ENCODE measurements at regions of chr2 and their contacts with region 1.

Region 1: GRCh38 chr2:82665691-82666090 is 1793.4 kb downstream of the SUCLG1 start:
- DNase-seq: no peak
- ATAC-seq: no peak
- H3K4me3 ChIP-seq: no peak overlapping the region
- H3K27ac ChIP-seq: no peak overlapping the region
- H3K4me1 ChIP-seq: no peaks in the 10 kb centered on the region
- H3K27me3 ChIP-seq: no peaks in the 10 kb centered on the region
- CTCF ChIP-seq: no peak
- POLR2A ChIP-seq: no peak
- RAD21 ChIP-seq: no peak

Region 2: DNA sequence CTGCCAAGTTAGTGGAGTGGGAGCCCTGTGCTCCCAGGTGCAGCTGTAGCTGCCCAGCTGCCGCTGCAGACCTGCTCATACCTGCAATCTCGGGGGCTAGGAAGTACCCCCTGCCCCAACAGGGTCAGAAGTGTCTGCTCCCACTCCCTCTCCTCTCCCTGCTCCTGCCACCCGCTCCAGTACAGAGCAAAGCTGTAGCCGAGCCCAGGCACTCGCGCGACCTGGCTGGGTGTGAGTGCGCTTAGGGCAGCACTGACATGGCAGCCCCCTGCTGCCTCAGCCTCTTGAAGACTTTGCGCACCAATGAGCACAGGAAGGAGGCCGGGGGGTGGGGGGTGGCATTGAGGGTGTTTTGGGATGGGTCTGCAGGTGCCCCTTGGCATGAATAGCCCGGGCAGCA is 158.0 kb before region 1 on chr2:
- CTCF ChIA-PET with region 1: no interaction called
- POLR2A ChIA-PET with region 1: no interaction called
- dilution Hi-C with region 1: no loop called
- in situ Hi-C with region 1: no loop called
- intact Hi-C with region 1: no loop called
- DNase-seq: no peak
- ATAC-seq: no peak
- H3K4me3 ChIP-seq: no peak overlapping the region
- H3K27ac ChIP-seq: no peak overlapping the region
- H3K4me1 ChIP-seq: no peaks in the 10 kb centered on the region
- H3K27me3 ChIP-seq: no peaks in the 10 kb centered on the region
- CTCF ChIP-seq: no peak
- POLR2A ChIP-seq: no peak
- RAD21 ChIP-seq: no peak

Region 3: DNA sequence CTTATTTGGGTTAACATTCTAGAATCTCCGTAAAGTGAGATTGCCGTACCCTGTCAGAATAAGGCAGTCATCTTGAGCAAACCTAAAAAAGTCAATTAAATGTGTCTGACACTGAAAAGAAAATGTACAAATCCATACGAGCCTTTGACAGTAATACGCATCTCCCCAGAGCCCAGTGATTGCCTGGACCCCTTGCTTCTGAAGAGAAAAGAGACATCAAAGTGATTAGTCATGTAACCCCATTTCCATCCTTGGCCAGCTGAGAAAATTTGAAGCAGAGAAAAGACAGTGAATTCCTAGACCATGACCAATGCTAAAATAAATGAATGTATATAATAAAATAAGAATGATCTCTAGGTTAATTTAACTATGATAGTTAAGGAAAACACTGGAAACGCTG is 294.0 kb after region 1 on chr2:
- CTCF ChIA-PET with region 1: no interaction called
- POLR2A ChIA-PET with region 1: no interaction called
- dilution Hi-C with region 1: no loop called
- in situ Hi-C with region 1: no loop called
- intact Hi-C with region 1: loop called (anchors 10 kb)
- DNase-seq: no peak
- ATAC-seq: no peak
- H3K4me3 ChIP-seq: no peak overlapping the region
- H3K27ac ChIP-seq: no peak overlapping the region
- H3K4me1 ChIP-seq: no peaks in the 10 kb centered on the region
- H3K27me3 ChIP-seq: no peaks in the 10 kb centered on the region
- CTCF ChIP-seq: no peak
- POLR2A ChIP-seq: no peak
- RAD21 ChIP-seq: no peak

Region 4: DNA sequence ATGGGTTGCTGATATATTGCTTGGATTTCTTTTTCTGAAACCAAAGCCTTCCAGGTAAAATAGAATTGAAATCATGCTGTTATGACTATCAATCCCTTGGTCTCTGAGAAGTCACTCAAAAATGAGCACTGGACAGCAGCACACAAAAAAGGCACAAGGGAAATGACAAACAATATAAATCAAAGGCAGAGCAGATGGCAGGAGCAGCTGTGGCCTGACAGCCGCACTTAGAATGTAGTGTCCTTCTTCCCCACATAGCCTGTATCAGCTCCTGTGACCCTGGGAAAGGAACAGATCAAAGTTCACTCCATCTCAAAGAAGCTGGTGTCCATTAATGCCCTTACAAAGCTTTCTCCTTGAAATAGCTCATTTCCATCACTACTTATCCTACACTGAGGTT is 1466.7 kb after region 1 on chr2:
- CTCF ChIA-PET with region 1: no interaction called
- POLR2A ChIA-PET with region 1: no interaction called
- dilution Hi-C with region 1: no loop called
- in situ Hi-C with region 1: no loop called
- intact Hi-C with region 1: no loop called
- DNase-seq: no peak
- ATAC-seq: no peak
- H3K4me3 ChIP-seq: no peak overlapping the region
- H3K27ac ChIP-seq: no peak overlapping the region
- H3K4me1 ChIP-seq: no peaks in the 10 kb centered on the region
- H3K27me3 ChIP-seq: no peaks in the 10 kb centered on the region
- CTCF ChIP-seq: no peak
- POLR2A ChIP-seq: no peak
- RAD21 ChIP-seq: no peak

Measured in IMR-90 (cell line).